CD4-positive, alpha-beta T cell (primary cell): ENCODE measurements at regions of chr7 and their contacts with region 1.

Region 1: GRCh38 chr7:98106647-98107445 is at the start of gene LMTK2:
- DNase-seq: peak; percentile 90 to 99 (median 96)
- ATAC-seq: peak; percentile 100
- H3K4me3 ChIP-seq: peak within 1 kb of the TSS; percentile 68
- H3K4me3 Mint-ChIP-seq: peak within 1 kb of the TSS; percentile 100
- H3K27ac ChIP-seq: peak within 1 kb of the TSS; percentile 37 to 68
- H3K27ac Mint-ChIP-seq: peak within 1 kb of the TSS; percentile 88
- H3K4me1 ChIP-seq: peaks cover 22% of the 10 kb centered on the region
- H3K4me1 Mint-ChIP-seq: peaks cover 53% of the 10 kb centered on the region
- H3K27me3 ChIP-seq: peaks cover 3 to 15% of the 10 kb centered on the region in 2 experiments
- H3K27me3 Mint-ChIP-seq: peaks cover 14% of the 10 kb centered on the region
- CTCF ChIP-seq: peak; percentile 98
- total RNA-seq, gene LMTK2: 30.3 to 31.7 TPM

Region 2: DNA sequence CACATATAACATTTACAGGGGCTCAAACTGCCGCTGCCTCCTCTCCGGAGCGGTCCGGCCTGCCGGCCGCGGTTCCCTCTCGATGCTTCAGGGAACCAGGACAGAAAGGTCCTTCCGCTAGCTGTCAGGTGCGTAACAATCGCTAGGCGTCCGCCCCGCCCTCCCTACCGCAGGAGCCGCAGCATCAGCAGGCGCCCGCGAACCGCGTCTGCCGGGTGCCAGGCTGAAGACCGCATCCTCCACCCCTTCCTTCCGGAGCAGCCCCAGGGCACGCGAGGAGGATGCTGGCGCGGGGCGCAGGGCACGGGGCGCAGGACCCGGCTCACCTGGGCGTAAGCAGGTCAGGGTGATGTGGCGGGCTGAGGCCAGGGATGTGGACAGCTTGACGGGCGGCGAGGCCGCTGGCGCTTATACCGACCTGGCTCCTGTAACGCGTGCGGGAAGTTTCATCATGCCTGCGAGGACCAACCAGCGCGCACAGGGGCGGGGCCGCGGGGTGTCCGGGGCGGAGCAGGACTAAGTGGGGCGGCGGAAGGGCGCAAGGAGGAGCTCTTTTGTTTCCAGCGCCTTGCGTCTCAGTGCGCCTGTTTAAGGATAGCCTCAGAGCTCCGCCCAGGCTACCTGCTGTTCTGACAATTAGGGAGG is 234.7 kb before region 1 on chr7 and contains the start of gene ASNS:
- CTCF ChIA-PET with region 1: no interaction called
- POLR2A ChIA-PET with region 1: no interaction called
- intact Hi-C with region 1: loop called in 1 of 2 experiments (anchors 10 kb)
- DNase-seq: peak; percentile 62 to 93 (median 74)
- ATAC-seq: peak; percentile 82
- H3K4me3 ChIP-seq: peak within 1 kb of the TSS; percentile 77
- H3K4me3 Mint-ChIP-seq: peak within 1 kb of the TSS; percentile 91
- H3K27ac ChIP-seq: peak within 1 kb of the TSS; percentile 64 to 77
- H3K27ac Mint-ChIP-seq: peak within 1 kb of the TSS; percentile 81
- H3K4me1 ChIP-seq: peaks cover 19% of the 10 kb centered on the region
- H3K4me1 Mint-ChIP-seq: peaks cover 27% of the 10 kb centered on the region
- H3K27me3 ChIP-seq: no peaks in the 10 kb centered on the region
- H3K27me3 Mint-ChIP-seq: no peaks in the 10 kb centered on the region
- CTCF ChIP-seq: no peak
- total RNA-seq, gene ASNS: 18.3 to 19.5 TPM

Region 3: DNA sequence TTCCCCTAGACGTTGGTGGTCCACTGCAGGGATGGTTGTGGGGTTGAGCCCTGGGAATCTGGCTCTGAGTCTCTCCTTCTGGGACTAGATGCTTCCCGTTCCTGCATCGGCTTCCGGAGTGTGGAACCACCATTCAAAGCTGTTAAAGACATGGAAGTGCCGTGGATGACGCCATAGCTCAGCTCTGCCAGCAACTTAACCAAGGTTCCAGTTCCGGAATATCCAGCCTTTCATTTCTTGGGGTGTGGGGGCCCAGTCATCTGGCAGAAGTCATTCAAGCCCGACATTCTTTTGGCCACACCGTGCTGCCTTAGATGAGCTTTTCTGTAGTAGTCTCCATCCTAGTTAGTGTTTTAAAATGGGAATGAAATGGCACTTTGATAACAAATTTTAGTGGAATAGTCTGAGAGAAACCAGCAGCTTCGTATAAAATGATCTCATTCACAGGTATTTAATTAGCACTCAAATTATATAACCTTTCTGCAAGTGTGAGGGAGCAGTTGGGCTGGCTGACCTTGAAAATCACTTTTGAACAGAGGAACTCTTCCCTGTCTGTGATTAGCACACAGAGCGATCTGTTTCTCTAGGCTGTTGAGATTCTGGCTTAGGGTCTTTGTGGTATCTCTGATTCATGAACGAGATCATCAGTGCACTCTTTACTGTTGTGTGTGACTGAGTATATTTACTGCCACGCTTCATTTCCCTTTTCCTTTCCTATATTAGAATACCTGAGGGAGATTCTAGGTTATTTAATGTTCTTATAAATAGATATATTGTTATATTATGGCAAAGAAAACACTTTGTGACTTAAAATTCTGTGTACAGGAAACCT is 19.7 kb after region 1 on chr7:
- CTCF ChIA-PET with region 1: no interaction called
- POLR2A ChIA-PET with region 1: no interaction called
- intact Hi-C with region 1: no loop called
- DNase-seq: no peak
- ATAC-seq: no peak
- H3K4me3 ChIP-seq: no peak overlapping the region
- H3K4me3 Mint-ChIP-seq: no peak overlapping the region
- H3K27ac ChIP-seq: no peak overlapping the region
- H3K27ac Mint-ChIP-seq: no peak overlapping the region
- H3K4me1 ChIP-seq: peaks cover 11% of the 10 kb centered on the region
- H3K4me1 Mint-ChIP-seq: peaks cover 63% of the 10 kb centered on the region
- H3K27me3 ChIP-seq: no peaks in the 10 kb centered on the region
- H3K27me3 Mint-ChIP-seq: no peaks in the 10 kb centered on the region
- CTCF ChIP-seq: no peak

Region 4: GRCh38 chr7:98168181-98168905 is 61.5 kb after region 1 on chr7:
- CTCF ChIA-PET with region 1: interaction called, 27 read pairs
- POLR2A ChIA-PET with region 1: interaction called, 3 read pairs
- intact Hi-C with region 1: loop called (anchors 1 kb)
- DNase-seq: peak; percentile 32 to 86 (median 56)
- ATAC-seq: peak; percentile 70
- H3K4me3 ChIP-seq: no peak overlapping the region
- H3K4me3 Mint-ChIP-seq: no peak overlapping the region
- H3K27ac ChIP-seq: no peak overlapping the region
- H3K27ac Mint-ChIP-seq: peak overlapping the region; percentile 30
- H3K4me1 ChIP-seq: no peaks in the 10 kb centered on the region
- H3K4me1 Mint-ChIP-seq: peaks cover 25% of the 10 kb centered on the region
- H3K27me3 ChIP-seq: no peaks in the 10 kb centered on the region
- H3K27me3 Mint-ChIP-seq: no peaks in the 10 kb centered on the region
- CTCF ChIP-seq: peak; percentile 78

Region 5: GRCh38 chr7:98280791-98281756 is 174.2 kb after region 1 on chr7 and contains the start of gene BRI3:
- CTCF ChIA-PET with region 1: no interaction called
- POLR2A ChIA-PET with region 1: no interaction called
- intact Hi-C with region 1: loop called in 1 of 2 experiments (anchors 2 kb)
- DNase-seq: peak; percentile 83 to 98 (median 92)
- ATAC-seq: peak; percentile 77
- H3K4me3 ChIP-seq: peak within 1 kb of the TSS; percentile 77
- H3K4me3 Mint-ChIP-seq: peak within 1 kb of the TSS; percentile 90
- H3K27ac ChIP-seq: peak within 1 kb of the TSS; percentile 62 to 73
- H3K27ac Mint-ChIP-seq: peak within 1 kb of the TSS; percentile 91
- H3K4me1 ChIP-seq: peaks cover 51% of the 10 kb centered on the region
- H3K4me1 Mint-ChIP-seq: peaks cover 37% of the 10 kb centered on the region
- H3K27me3 ChIP-seq: no peaks in the 10 kb centered on the region
- H3K27me3 Mint-ChIP-seq: no peaks in the 10 kb centered on the region
- CTCF ChIP-seq: peak; percentile 53
- total RNA-seq, gene BRI3: 68.0 to 76.5 TPM

Region 6: GRCh38 chr7:98372993-98373392 is 266.1 kb after region 1 on chr7:
- CTCF ChIA-PET with region 1: no interaction called
- POLR2A ChIA-PET with region 1: no interaction called
- intact Hi-C with region 1: no loop called
- DNase-seq: no peak
- ATAC-seq: no peak
- H3K4me3 ChIP-seq: no peak overlapping the region
- H3K4me3 Mint-ChIP-seq: no peak overlapping the region
- H3K27ac ChIP-seq: no peak overlapping the region
- H3K27ac Mint-ChIP-seq: no peak overlapping the region
- H3K4me1 ChIP-seq: no peaks in the 10 kb centered on the region
- H3K4me1 Mint-ChIP-seq: no peaks in the 10 kb centered on the region
- H3K27me3 ChIP-seq: no peaks in the 10 kb centered on the region
- H3K27me3 Mint-ChIP-seq: peaks cover 6% of the 10 kb centered on the region
- CTCF ChIP-seq: no peak

Region 7: GRCh38 chr7:98878365-98879165 is 771.7 kb after region 1 on chr7 and contains the start of gene TRRAP:
- CTCF ChIA-PET with region 1: no interaction called
- POLR2A ChIA-PET with region 1: no interaction called
- intact Hi-C with region 1: loop called in 1 of 2 experiments (anchors 5 kb)
- DNase-seq: peak; percentile 60 to 88 (median 70)
- ATAC-seq: peak; percentile 56
- H3K4me3 ChIP-seq: peak within 1 kb of the TSS; percentile 97
- H3K4me3 Mint-ChIP-seq: peak within 1 kb of the TSS; percentile 97
- H3K27ac ChIP-seq: peak within 1 kb of the TSS; percentile 87 to 91
- H3K27ac Mint-ChIP-seq: peak within 1 kb of the TSS; percentile 97
- H3K4me1 ChIP-seq: peaks cover 27% of the 10 kb centered on the region
- H3K4me1 Mint-ChIP-seq: peaks cover 31% of the 10 kb centered on the region
- H3K27me3 ChIP-seq: no peaks in the 10 kb centered on the region
- H3K27me3 Mint-ChIP-seq: no peaks in the 10 kb centered on the region
- CTCF ChIP-seq: peak; percentile 89
- total RNA-seq, gene TRRAP: 47.9 to 48.3 TPM